Calu3 (cell line): ENCODE measurements at regions of chr3 and their contacts with region 1.

Region 1: DNA sequence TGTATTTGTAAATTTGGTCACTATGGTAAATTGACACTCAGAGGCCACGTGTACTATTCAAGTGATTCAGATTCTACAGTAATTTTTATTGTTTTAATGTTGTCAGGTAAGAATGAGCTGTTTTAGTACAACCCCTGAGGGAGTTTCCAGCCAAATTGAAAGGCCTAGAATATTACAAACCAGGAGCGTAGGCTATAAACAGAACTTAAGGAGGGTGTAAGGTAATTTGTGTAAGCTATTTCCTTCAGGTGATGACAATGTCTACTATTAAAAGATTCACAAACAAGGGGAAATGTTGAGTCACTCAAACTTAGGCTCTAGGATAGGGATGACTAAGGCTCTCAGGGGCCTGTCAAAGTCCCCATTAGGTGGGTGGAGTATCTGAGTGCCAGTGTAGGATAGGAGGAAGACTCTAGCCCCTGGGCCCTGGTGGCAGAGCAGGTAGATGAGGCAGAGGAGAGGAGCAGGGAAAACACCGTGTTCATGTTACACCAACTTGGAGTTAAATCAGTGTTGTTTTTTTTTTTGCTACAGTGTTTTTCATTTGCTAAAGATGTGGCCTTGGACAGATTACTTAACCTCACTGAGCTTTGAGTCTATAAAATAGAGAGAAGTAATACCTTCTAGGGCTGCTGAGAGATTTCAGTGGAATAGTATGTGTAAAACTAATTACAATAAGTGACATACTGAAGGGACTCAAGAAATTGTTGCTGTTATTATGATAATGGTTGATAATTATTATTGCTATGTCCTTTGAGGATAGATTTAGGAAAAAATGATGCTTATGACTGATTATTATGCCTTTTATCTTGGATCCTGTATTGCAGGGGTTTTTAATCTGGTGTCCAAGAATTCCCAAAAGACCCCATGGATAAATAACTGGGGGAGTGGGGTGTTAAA is 10.3 kb downstream of the TM4SF1 start:
- DNase-seq: peak; percentile 92
- H3K4me3 Mint-ChIP-seq: peak overlapping the region; percentile 54
- H3K27ac Mint-ChIP-seq: peak overlapping the region; percentile 99
- H3K4me1 Mint-ChIP-seq: peaks cover 67% of the 10 kb centered on the region
- H3K27me3 Mint-ChIP-seq: peaks cover 8% of the 10 kb centered on the region
- CTCF ChIP-seq: no peak

Region 2: DNA sequence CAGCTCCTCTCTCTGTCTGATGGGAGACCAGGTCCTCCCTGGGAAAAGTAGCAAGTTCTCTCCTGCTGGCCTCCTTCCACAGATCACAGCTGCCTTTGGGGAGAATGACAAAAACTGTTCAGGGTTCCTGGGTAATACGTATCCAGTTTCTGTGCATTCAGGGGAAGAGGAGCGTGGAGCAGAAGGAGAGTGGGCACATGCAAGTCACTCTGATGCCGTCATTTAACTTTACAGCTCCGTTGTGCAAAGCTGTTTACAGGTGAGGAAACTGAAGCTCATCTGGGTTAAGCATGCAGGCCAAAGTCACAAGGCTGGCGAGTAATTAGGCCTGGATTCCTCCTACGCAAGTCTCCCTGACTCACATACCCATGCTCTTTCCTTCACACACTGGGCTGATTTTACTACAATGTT is 17.7 kb after region 1 on chr3:
- CTCF ChIA-PET with region 1: interaction called, 12 read pairs
- intact Hi-C with region 1: loop called (anchors 1 kb)
- DNase-seq: peak; percentile 64
- H3K4me3 Mint-ChIP-seq: peak overlapping the region; percentile 59
- H3K27ac Mint-ChIP-seq: peak overlapping the region; percentile 97
- H3K4me1 Mint-ChIP-seq: peaks cover 85% of the 10 kb centered on the region
- H3K27me3 Mint-ChIP-seq: no peaks in the 10 kb centered on the region
- CTCF ChIP-seq: no peak